SK-N-SH (cell line): ENCODE measurements at regions of chr17 and their contacts with region 1.

Region 1: GRCh38 chr17:77476931-77477877 is 336.4 kb downstream of the SEC14L1 start:
- DNase-seq: peak; percentile 91
- H3K4me3 ChIP-seq: no peak overlapping the region
- H3K27ac ChIP-seq: peak overlapping the region; percentile 57 to 86
- H3K4me1 ChIP-seq: peaks cover 65 to 85% of the 10 kb centered on the region in 2 experiments
- H3K27me3 ChIP-seq: no peaks in the 10 kb centered on the region
- CTCF ChIP-seq: no peak
- EP300 ChIP-seq: peak in 1 of 2 experiments; percentile 73; a peak in 2 of 4 replicates
- RAD21 ChIP-seq: peak; percentile 34; the same call in 1 of the 2 replicates

Region 2: DNA sequence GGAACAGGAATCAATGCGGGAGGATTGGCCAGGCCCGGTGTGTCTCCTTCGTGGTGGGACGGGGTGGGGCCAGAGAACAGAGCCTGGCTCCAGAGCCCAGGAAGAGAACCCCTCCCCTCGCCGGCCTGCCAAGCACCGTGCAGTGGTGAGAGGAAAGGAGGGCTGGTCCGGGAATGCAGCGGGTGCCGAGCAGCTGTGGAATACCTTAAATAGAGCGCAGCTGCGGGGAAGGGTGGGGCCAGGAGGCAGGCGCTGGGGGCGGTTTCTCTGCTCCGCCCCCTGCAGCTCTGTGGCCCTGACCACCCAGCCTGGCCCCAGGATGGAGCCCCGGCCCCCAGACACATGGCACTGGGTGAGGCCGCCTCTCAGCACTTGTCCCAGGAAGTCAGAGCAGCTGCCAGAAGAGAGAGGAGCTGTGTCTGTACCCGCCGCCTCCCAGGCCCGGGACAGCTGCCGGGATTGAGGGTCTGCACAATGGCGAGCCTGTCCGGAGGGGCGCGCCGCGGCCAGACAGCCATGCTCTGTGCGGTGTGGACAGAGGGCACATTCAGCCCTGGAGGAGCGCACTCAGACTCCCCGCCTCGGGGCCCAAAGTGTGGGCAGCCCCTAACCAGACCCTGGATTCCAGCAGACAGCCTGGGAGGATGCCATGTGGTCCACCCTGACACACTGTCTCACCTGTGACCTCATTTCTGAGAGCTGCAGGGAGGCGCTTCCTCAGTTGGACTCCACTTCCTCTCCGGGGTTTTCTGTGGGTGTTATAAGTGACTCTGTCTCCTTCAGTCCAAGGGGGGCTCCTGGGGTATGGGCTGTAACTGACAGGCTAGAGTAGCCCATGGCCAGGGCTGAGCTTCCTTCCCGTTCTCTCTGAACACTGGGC is 67.7 kb before region 1 on chr17:
- CTCF ChIA-PET with region 1: no interaction called
- POLR2A ChIA-PET with region 1: no interaction called
- DNase-seq: no peak
- H3K4me3 ChIP-seq: no peak overlapping the region
- H3K27ac ChIP-seq: no peak overlapping the region
- H3K4me1 ChIP-seq: peaks cover 14 to 37% of the 10 kb centered on the region in 2 experiments; a peak in 3 of 4 replicates
- H3K27me3 ChIP-seq: no peaks in the 10 kb centered on the region
- CTCF ChIP-seq: no peak
- EP300 ChIP-seq: no peak
- RAD21 ChIP-seq: no peak

Region 3: DNA sequence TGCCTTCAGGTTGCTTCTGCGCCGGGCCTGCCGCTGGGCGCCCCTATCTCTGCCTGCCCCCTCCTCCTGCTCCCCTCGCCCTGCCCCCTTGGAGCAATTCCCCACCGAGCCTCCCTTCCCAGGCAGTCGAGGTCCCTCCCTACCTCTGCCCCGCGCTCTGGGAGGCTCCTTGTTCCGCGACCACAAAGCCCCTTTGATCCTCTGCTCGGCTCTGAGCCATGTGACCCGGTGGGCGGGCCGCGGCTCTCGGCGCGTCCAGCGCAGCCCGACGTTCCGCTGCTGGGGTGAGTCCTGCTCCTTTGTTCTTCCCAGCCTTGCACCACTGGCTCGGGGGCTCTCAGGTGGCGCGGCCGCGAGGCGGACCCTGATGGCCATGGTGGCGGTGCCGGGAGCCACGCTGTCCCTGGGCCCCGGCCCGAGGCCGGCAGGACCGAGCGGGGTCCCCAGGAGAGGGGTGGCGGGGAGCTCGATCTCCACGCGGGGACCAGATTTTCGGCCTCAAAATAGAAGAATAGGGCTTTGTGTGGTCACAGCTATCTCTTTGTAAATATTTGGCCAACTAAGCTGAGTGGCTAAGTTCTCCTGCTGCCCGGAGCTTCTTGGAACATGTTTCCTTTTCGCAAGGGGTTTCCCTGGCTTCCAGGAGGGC is 25.8 kb before region 1 on chr17:
- CTCF ChIA-PET with region 1: interaction called, 5 read pairs
- POLR2A ChIA-PET with region 1: interaction called, 17 read pairs
- DNase-seq: peak; percentile 93
- H3K4me3 ChIP-seq: peak overlapping the region; percentile 61 to 79
- H3K27ac ChIP-seq: peak overlapping the region; percentile 89 to 95
- H3K4me1 ChIP-seq: peaks cover 28 to 56% of the 10 kb centered on the region in 2 experiments
- H3K27me3 ChIP-seq: no peaks in the 10 kb centered on the region
- CTCF ChIP-seq: no peak
- EP300 ChIP-seq: no peak
- RAD21 ChIP-seq: no peak

Region 4: DNA sequence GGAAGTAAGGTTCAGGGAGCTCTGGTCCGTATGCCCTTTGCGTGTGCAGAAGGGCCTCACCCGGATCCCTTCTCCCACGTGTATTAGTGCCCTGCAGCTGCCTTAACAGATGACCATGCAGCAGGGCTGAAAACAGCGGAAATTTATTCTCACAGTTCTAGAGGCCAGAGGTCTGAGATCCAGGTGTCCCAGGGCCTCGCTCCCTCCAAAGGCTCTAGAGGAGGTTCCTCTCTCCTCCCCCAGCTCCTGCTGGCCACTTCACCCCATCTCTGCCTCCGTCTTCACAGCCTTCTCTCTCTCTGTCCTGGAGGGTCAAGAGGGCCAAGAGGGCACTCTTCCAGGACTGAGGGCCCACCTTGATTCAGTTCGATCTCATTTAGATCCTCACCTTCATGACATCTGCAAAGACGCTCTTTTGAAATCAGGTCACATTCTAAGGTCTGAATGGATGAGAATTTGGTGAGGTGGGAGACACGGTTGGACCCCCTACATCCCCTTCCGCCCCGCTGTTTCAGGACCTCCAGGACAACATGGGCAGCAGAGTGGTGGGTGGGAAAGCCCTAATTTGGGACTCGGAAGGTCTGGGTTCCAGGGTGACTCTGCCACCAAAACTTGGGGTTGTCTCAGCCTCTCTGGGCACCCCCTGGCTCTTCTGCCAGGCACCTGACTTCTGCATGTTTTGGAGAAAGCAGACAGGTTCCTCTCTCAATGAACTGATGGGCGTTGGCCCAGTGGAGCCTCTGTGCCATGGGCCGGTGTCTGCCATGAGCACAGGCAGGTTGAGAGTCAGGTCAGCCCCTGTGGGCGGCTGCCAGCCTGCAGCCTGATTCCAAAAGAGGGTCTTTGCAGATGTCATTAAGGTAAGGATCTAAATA is 24.8 kb after region 1 on chr17:
- CTCF ChIA-PET with region 1: no interaction called
- POLR2A ChIA-PET with region 1: no interaction called
- DNase-seq: peak; percentile 27
- H3K4me3 ChIP-seq: no peak overlapping the region
- H3K27ac ChIP-seq: no peak overlapping the region
- H3K4me1 ChIP-seq: peaks cover 0 to 9% of the 10 kb centered on the region in 2 experiments; a peak in 1 of 4 replicates
- H3K27me3 ChIP-seq: no peaks in the 10 kb centered on the region
- CTCF ChIP-seq: no peak
- EP300 ChIP-seq: no peak
- RAD21 ChIP-seq: no peak

Region 5: GRCh38 chr17:77581480-77581879 is 104.3 kb after region 1 on chr17:
- CTCF ChIA-PET with region 1: no interaction called
- POLR2A ChIA-PET with region 1: no interaction called
- DNase-seq: no peak
- H3K4me3 ChIP-seq: no peak overlapping the region
- H3K27ac ChIP-seq: no peak overlapping the region
- H3K4me1 ChIP-seq: no peaks in the 10 kb centered on the region
- H3K27me3 ChIP-seq: peaks cover 26% of the 10 kb centered on the region
- CTCF ChIP-seq: no peak
- EP300 ChIP-seq: no peak
- RAD21 ChIP-seq: no peak